ENCODE measurements at regions of chr14 and their contacts with region 1.

Region 1: DNA sequence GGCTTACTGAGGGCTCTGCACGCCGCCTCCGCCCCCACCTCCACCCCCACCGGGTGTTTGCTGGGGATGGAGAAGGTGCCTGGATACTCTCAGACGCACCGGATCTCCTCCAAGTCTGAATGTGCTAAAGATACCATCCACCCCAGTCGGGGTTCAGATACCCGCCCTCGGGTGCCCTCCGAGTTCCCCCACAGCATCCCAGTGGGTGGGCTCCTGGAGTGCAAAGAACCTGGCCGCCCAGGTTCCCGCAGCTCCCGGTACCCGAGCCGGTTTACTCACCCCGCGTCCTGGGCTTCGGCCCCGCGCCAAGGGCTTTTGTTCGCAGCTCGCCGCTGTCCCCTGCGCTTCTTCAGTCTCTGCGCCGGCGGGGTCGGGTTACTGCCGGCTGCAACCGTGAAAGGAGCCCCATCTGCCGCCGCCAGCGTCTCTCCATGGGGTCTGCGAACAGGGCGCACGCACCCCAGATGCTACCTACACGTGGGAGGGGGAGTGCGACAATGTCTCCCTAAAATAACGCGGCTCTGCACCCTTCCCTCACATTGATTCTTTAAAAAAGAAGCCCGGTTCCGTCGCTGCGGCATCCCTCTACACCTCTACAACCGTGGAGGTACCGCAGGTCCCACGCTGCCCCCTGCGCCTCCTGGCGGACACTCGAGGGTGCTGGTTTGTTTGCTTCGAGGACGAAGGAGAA is at the start of gene CCDC177:
- DNase-seq: peak; percentile 63 to 73 (median 65)
- H3K4me3 ChIP-seq: peak within 1 kb of the TSS in 1 of 2 donors; percentile 48
- H3K4me3 Mint-ChIP-seq: peak within 1 kb of the TSS; percentile 83 to 95 (median 90)
- H3K27ac ChIP-seq: no peak within 1 kb of the TSS
- H3K27ac Mint-ChIP-seq: peak within 1 kb of the TSS in 1 of 7 donors; percentile 61
- H3K4me1 ChIP-seq: peaks cover 13% of the 10 kb centered on the region
- H3K4me1 Mint-ChIP-seq: peaks cover 6 to 29% (median 11%) of the 10 kb centered on the region in 4 donors
- H3K27me3 ChIP-seq: peaks cover 23% of the 10 kb centered on the region
- H3K27me3 Mint-ChIP-seq: peaks cover 36% of the 10 kb centered on the region in 2 donors
- total RNA-seq, gene CCDC177: not detected

Region 2: DNA sequence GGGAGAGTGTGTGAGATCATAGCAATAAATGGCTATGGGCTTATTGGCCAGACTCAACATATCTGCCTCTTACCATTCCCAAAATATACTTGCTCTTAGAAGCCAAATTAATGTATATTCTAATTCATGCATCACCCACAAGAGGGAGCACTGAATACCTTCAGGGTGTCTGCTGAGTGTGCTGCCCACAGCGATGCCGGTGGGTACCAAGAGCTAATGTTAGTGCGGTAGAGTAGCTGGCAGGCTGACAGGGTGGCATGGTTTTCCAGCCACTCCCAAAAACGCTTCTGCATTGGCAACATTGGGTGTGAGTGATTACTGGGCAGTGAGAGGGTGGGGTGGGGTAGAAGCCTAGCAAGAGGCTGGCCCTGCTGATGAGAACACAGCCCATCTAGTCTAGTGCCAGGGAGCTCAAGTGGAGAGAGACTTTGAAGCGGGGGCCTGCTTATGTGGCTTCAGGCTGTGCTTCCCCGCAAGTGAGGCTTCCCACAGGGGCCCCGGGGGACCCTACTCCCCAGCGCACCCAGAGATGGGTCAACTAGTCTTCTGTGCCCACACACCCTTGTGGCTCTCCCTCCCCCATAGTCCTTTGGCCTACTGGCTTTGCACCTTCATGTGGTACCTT is 99.1 kb before region 1 on chr14:
- CTCF ChIA-PET with region 1: no interaction called
- POLR2A ChIA-PET with region 1: no interaction called
- intact Hi-C with region 1: loop called (anchors 1 kb)
- DNase-seq: no peak
- H3K4me3 ChIP-seq: no peak overlapping the region
- H3K4me3 Mint-ChIP-seq: no peak overlapping the region
- H3K27ac ChIP-seq: no peak overlapping the region
- H3K27ac Mint-ChIP-seq: peak overlapping the region in 1 of 7 donors; percentile 58
- H3K4me1 ChIP-seq: no peaks in the 10 kb centered on the region
- H3K4me1 Mint-ChIP-seq: no peaks in the 10 kb centered on the region
- H3K27me3 ChIP-seq: no peaks in the 10 kb centered on the region
- H3K27me3 Mint-ChIP-seq: peaks cover 2 to 7% of the 10 kb centered on the region in 2 donors